Endothelial cell of umbilical vein (primary cell): ENCODE measurements at regions of chr14 and their contacts with region 1.

Region 1: GRCh38 chr14:47278234-47278842 is 397.1 kb downstream of the MDGA2 start:
- DNase-seq: peak; percentile 64
- H3K4me3 ChIP-seq: no peak overlapping the region
- H3K27ac ChIP-seq: no peak overlapping the region
- H3K4me1 ChIP-seq: no peaks in the 10 kb centered on the region
- H3K27me3 ChIP-seq: no peaks in the 10 kb centered on the region
- CTCF ChIP-seq: peak; percentile 78 to 85
- POLR2A ChIP-seq: no peak

Region 2: DNA sequence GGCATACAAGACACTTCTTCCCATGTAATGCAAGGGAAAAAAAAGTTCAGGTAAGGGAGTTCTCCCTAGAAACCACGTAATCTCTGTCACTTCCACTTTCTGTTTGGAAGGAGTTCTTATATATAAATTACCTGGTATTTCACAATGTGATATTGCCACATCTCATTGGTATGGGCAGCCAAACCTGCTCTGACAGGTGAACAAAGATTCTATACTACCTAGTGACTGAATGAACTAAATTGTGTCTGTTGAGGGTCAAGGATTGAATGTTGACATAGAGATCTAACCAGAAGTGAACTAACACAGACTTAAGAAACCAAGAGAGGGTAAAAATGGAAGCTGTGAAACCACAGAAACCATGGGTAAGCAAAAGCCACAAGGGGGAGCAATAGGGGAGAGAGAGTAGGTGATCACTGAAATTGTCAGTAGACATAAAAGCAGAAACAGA is 788.1 kb before region 1 on chr14:
- CTCF ChIA-PET with region 1: interaction called, 6 read pairs
- POLR2A ChIA-PET with region 1: no interaction called
- dilution Hi-C with region 1: no loop called
- intact Hi-C with region 1: loop called (anchors 1 kb)
- DNase-seq: peak; percentile 55
- H3K4me3 ChIP-seq: no peak overlapping the region
- H3K27ac ChIP-seq: no peak overlapping the region
- H3K4me1 ChIP-seq: no peaks in the 10 kb centered on the region
- H3K27me3 ChIP-seq: no peaks in the 10 kb centered on the region
- CTCF ChIP-seq: peak; percentile 29 to 49
- POLR2A ChIP-seq: no peak

Region 3: GRCh38 chr14:46581036-46581671 is 697.2 kb before region 1 on chr14:
- CTCF ChIA-PET with region 1: interaction called, 59 read pairs
- POLR2A ChIA-PET with region 1: no interaction called
- dilution Hi-C with region 1: no loop called
- intact Hi-C with region 1: loop called (anchors 1 kb)
- DNase-seq: peak; percentile 63
- H3K4me3 ChIP-seq: no peak overlapping the region
- H3K27ac ChIP-seq: no peak overlapping the region
- H3K4me1 ChIP-seq: peaks cover 10% of the 10 kb centered on the region
- H3K27me3 ChIP-seq: no peaks in the 10 kb centered on the region
- CTCF ChIP-seq: peak; percentile 60 to 63
- POLR2A ChIP-seq: no peak

Region 4: DNA sequence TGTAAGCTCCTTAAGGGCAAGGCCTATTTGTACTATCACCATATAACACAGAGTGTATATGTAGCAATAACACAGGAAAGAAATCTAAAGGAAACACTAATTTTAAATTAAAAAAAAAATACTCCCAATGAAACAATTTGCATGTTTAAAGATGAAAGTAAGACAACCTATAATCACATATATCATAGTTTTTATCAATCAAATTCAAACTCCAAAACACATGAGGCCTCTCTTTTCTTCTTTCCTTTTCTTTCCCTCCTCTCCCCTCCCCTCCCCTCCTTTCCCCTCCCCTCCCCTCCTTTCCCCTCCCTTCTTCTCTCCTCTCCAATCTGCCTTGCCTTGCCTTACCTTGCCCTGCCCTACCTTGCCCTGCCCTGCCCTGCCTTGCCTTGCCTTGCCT is 221.0 kb before region 1 on chr14:
- CTCF ChIA-PET with region 1: interaction called, 10 read pairs
- POLR2A ChIA-PET with region 1: no interaction called
- dilution Hi-C with region 1: no loop called
- intact Hi-C with region 1: no loop called
- DNase-seq: no peak
- H3K4me3 ChIP-seq: no peak overlapping the region
- H3K27ac ChIP-seq: no peak overlapping the region
- H3K4me1 ChIP-seq: no peaks in the 10 kb centered on the region
- H3K27me3 ChIP-seq: no peaks in the 10 kb centered on the region
- CTCF ChIP-seq: no peak
- POLR2A ChIP-seq: no peak

Region 5: DNA sequence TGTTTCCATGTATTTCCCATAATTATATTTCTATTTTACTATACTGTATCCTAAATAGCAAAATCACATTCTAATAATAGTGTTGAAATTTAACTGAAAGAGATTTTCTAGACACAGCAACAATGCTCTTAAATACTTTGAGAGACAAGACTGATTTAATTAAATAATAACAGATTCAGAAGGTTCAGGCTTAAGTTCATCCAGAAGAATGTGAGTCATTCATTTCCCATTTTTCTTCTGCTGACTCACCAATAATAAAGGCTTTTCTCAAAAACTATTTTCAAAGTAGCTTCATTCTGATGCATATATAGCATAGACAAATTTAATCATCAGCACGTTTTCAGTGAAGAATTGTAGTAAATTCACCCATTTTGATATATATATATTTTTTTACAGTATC is 84.3 kb before region 1 on chr14:
- CTCF ChIA-PET with region 1: interaction called, 11 read pairs
- POLR2A ChIA-PET with region 1: no interaction called
- dilution Hi-C with region 1: no loop called
- intact Hi-C with region 1: loop called (anchors 5 kb)
- DNase-seq: peak; percentile 69
- H3K4me3 ChIP-seq: no peak overlapping the region
- H3K27ac ChIP-seq: peak overlapping the region; percentile 23
- H3K4me1 ChIP-seq: peaks cover 16% of the 10 kb centered on the region
- H3K27me3 ChIP-seq: no peaks in the 10 kb centered on the region
- CTCF ChIP-seq: no peak
- POLR2A ChIP-seq: no peak

Region 6: GRCh38 chr14:47226877-47227520 is 51.3 kb before region 1 on chr14:
- CTCF ChIA-PET with region 1: interaction called, 10 read pairs
- POLR2A ChIA-PET with region 1: no interaction called
- dilution Hi-C with region 1: no loop called
- intact Hi-C with region 1: no loop called
- DNase-seq: peak; percentile 85
- H3K4me3 ChIP-seq: peak overlapping the region in 1 of 3 experiments; percentile 13
- H3K27ac ChIP-seq: peak overlapping the region; percentile 69
- H3K4me1 ChIP-seq: peaks cover 35% of the 10 kb centered on the region
- H3K27me3 ChIP-seq: no peaks in the 10 kb centered on the region
- CTCF ChIP-seq: no peak
- POLR2A ChIP-seq: no peak